Caco-2 (cell line): ENCODE measurements at regions of chr11 and their contacts with region 1.

Region 1: GRCh38 chr11:29448246-29448877 is 568.5 kb downstream of the KCNA4 start:
- DNase-seq: peak in 1 of 2 experiments; percentile 19
- H3K4me3 ChIP-seq: no peak overlapping the region
- H3K4me3 Mint-ChIP-seq: no peak overlapping the region
- H3K27ac Mint-ChIP-seq: no peak overlapping the region
- H3K4me1 ChIP-seq: no peaks in the 10 kb centered on the region
- H3K4me1 Mint-ChIP-seq: no peaks in the 10 kb centered on the region
- H3K27me3 ChIP-seq: no peaks in the 10 kb centered on the region
- H3K27me3 Mint-ChIP-seq: no peaks in the 10 kb centered on the region
- CTCF ChIP-seq: peak; percentile 24 to 50

Region 2: GRCh38 chr11:30143098-30143705 is 694.8 kb after region 1 on chr11:
- CTCF ChIA-PET with region 1: interaction called, 4 read pairs
- POLR2A ChIA-PET with region 1: no interaction called
- intact Hi-C with region 1: loop called (anchors 1 kb)
- DNase-seq: peak in 1 of 2 experiments; percentile 58
- H3K4me3 ChIP-seq: no peak overlapping the region
- H3K4me3 Mint-ChIP-seq: no peak overlapping the region
- H3K27ac Mint-ChIP-seq: no peak overlapping the region
- H3K4me1 ChIP-seq: no peaks in the 10 kb centered on the region
- H3K4me1 Mint-ChIP-seq: no peaks in the 10 kb centered on the region
- H3K27me3 ChIP-seq: no peaks in the 10 kb centered on the region
- H3K27me3 Mint-ChIP-seq: no peaks in the 10 kb centered on the region
- CTCF ChIP-seq: peak; percentile 53 to 72

Region 3: DNA sequence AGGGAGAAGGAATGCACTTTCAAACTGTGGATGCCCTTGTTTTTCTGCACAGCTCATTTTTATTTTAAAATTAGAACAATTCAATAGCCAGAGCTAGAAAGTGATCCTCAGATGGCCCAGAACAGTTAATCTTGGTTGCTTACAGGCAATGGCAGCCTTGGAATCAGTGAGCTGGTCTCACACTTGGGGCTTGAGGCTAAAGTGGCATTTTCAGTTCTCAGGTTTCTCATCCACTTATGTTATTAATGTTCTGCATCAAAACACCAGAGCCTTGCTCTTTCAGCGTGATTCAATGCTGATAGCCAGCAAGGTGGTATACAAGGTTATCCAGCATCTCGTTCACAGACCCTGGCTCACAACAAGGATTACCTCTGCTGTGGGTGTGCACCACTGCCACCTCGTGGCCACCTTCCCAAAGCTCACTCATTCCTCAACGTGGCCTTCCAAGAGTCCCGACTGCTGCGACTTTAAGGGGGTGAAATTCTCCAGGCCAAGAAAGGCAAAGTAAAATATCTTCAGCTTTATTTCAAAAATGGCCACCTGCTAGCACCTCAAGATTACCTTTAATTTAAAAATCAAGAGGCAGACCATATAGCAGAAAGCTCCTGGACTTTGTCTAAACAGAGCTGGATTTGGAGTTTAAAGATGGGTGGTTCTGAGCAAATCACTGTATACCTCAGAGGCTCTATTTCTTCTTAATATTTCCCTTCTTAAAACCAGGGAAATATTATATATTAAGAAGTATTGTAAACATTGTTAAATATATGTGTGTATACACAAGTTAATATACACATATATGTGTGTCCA is 748.2 kb after region 1 on chr11:
- CTCF ChIA-PET with region 1: no interaction called
- POLR2A ChIA-PET with region 1: no interaction called
- intact Hi-C with region 1: loop called (anchors 1 kb)
- DNase-seq: peak; percentile 65 to 70
- H3K4me3 ChIP-seq: no peak overlapping the region
- H3K4me3 Mint-ChIP-seq: no peak overlapping the region
- H3K27ac Mint-ChIP-seq: no peak overlapping the region
- H3K4me1 ChIP-seq: no peaks in the 10 kb centered on the region
- H3K4me1 Mint-ChIP-seq: no peaks in the 10 kb centered on the region
- H3K27me3 ChIP-seq: no peaks in the 10 kb centered on the region
- H3K27me3 Mint-ChIP-seq: no peaks in the 10 kb centered on the region
- CTCF ChIP-seq: peak; percentile 75 to 88

Region 4: GRCh38 chr11:30314625-30315024 is 866.3 kb after region 1 on chr11:
- CTCF ChIA-PET with region 1: no interaction called
- POLR2A ChIA-PET with region 1: no interaction called
- intact Hi-C with region 1: loop called (anchors 1 kb)
- DNase-seq: no peak
- H3K4me3 ChIP-seq: no peak overlapping the region
- H3K4me3 Mint-ChIP-seq: no peak overlapping the region
- H3K27ac Mint-ChIP-seq: no peak overlapping the region
- H3K4me1 ChIP-seq: no peaks in the 10 kb centered on the region
- H3K4me1 Mint-ChIP-seq: no peaks in the 10 kb centered on the region
- H3K27me3 ChIP-seq: no peaks in the 10 kb centered on the region
- H3K27me3 Mint-ChIP-seq: no peaks in the 10 kb centered on the region
- CTCF ChIP-seq: peak; percentile 48 to 53

Region 5: GRCh38 chr11:30705913-30706675 is 1257.7 kb after region 1 on chr11:
- CTCF ChIA-PET with region 1: no interaction called
- POLR2A ChIA-PET with region 1: no interaction called
- intact Hi-C with region 1: no loop called
- DNase-seq: no peak
- H3K4me3 ChIP-seq: no peak overlapping the region
- H3K4me3 Mint-ChIP-seq: no peak overlapping the region
- H3K27ac Mint-ChIP-seq: no peak overlapping the region
- H3K4me1 ChIP-seq: no peaks in the 10 kb centered on the region
- H3K4me1 Mint-ChIP-seq: no peaks in the 10 kb centered on the region
- H3K27me3 ChIP-seq: no peaks in the 10 kb centered on the region
- H3K27me3 Mint-ChIP-seq: no peaks in the 10 kb centered on the region
- CTCF ChIP-seq: no peak

Region 6: GRCh38 chr11:30917859-30918478 is 1469.6 kb after region 1 on chr11:
- CTCF ChIA-PET with region 1: no interaction called
- POLR2A ChIA-PET with region 1: no interaction called
- intact Hi-C with region 1: loop called (anchors 5 kb)
- DNase-seq: peak in 1 of 2 experiments; percentile 61
- H3K4me3 ChIP-seq: no peak overlapping the region
- H3K4me3 Mint-ChIP-seq: no peak overlapping the region
- H3K27ac Mint-ChIP-seq: no peak overlapping the region
- H3K4me1 ChIP-seq: no peaks in the 10 kb centered on the region
- H3K4me1 Mint-ChIP-seq: no peaks in the 10 kb centered on the region
- H3K27me3 ChIP-seq: no peaks in the 10 kb centered on the region; the same call in 1 of the 2 replicates
- H3K27me3 Mint-ChIP-seq: peaks cover 20% of the 10 kb centered on the region
- CTCF ChIP-seq: peak; percentile 55 to 75